ENCODE measurements at regions of chr7 and their contacts with region 1.

Region 1: DNA sequence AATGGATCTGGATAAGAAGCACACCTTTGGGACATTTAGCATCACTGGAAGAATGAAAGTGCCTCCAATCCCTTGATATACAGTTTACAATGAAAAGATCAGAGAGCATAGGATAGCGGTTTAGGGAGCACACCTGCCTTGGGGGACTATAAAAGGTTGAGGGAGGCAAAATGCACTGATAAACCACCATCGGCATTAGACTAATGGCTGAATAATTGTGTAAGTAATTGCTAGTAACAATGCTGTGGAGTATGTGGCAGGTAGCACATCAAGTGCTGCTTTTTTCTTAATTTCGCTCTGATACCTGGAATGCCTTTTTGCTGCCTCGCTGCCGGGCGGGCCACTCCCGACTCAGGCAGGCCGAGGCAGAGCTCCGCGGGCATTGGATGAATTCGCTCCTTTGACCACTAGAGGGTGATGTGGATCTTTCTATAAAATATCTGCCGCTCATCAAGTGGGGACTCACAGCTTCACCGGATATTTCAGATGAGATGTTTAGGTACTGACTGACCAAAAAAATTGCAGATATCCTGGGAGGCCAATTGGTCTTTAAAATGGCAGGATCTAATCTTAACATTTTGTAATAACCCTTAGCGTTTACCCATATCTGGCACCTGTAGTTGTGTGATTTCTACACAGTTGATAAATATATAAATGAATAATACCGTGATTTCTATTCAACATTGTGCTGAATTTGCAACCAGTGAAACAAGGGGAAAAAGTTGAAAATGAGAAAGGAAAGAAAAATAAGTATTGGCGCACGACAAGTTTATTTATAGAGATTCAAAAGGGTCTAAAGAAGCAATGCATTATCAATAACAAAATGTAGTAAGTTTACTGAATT is 116.8 kb upstream of the PRSS1 start:
- DNase-seq: peak; percentile 87
- H3K4me3 ChIP-seq: no peak overlapping the region
- H3K27ac ChIP-seq: peak overlapping the region in 1 of 2 experiments; percentile 11; a peak in 1 of 4 replicates
- H3K4me1 ChIP-seq: no peaks in the 10 kb centered on the region; a peak in 2 of 4 replicates
- H3K27me3 ChIP-seq: peaks cover 14% of the 10 kb centered on the region; the same call in 1 of the 2 replicates
- CTCF ChIP-seq: peak; percentile 93
- EP300 ChIP-seq: no peak
- RAD21 ChIP-seq: peak; percentile 96

Region 2: DNA sequence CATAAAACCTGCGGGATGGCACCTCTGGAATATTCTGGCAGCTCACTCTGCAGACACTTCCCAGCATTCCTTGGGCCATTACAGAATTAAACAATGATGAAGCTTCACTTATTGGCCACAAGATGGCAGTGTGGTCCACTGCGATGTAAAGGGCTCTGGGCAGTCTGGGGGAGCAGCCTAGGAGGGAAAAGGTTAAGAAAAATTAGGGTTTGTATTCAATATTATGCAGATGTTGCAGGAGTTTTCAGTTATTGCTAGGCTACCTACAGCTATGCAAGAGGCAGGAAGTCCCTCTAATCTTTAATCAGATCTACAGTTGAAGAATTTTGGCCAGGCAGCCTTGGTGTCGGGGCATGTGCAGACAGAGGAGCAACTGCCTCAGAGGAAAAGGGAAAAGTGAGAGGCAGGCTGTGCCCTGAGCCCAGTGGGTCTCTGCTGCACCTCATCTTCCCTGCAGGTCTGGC is 116.4 kb before region 1 on chr7:
- CTCF ChIA-PET with region 1: interaction called, 29 read pairs
- POLR2A ChIA-PET with region 1: no interaction called
- DNase-seq: peak; percentile 69
- H3K4me3 ChIP-seq: peak overlapping the region in 1 of 2 experiments; percentile 20; a peak in 1 of 4 replicates
- H3K27ac ChIP-seq: no peak overlapping the region; a peak in 1 of 4 replicates
- H3K4me1 ChIP-seq: peaks cover 0 to 18% of the 10 kb centered on the region in 2 experiments; a peak in 2 of 4 replicates
- H3K27me3 ChIP-seq: peaks cover 33% of the 10 kb centered on the region
- CTCF ChIP-seq: peak; percentile 96
- EP300 ChIP-seq: no peak
- RAD21 ChIP-seq: peak; percentile 85

Region 3: DNA sequence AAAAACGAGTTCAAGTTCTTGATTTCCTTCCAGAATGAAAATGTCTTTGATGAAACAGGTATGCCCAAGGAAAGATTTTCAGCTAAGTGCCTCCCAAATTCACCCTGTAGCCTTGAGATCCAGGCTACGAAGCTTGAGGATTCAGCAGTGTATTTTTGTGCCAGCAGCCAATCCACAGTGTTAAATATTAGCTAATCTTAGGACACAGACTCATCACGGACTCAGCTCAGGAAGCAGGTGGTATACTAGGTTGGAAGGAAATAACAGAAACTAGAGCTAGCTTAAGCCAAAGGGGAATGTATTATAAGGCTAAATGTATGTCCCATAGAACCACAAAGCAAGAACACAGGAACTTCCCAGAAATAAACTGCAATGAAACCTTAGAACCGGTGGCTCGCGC is 34.2 kb before region 1 on chr7:
- CTCF ChIA-PET with region 1: interaction called, 87 read pairs
- POLR2A ChIA-PET with region 1: no interaction called
- DNase-seq: no peak
- H3K4me3 ChIP-seq: no peak overlapping the region
- H3K27ac ChIP-seq: no peak overlapping the region
- H3K4me1 ChIP-seq: peaks cover 0 to 8% of the 10 kb centered on the region in 2 experiments; a peak in 1 of 4 replicates
- H3K27me3 ChIP-seq: peaks cover 12% of the 10 kb centered on the region; the same call in 1 of the 2 replicates
- CTCF ChIP-seq: no peak
- EP300 ChIP-seq: no peak
- RAD21 ChIP-seq: no peak

Region 4: DNA sequence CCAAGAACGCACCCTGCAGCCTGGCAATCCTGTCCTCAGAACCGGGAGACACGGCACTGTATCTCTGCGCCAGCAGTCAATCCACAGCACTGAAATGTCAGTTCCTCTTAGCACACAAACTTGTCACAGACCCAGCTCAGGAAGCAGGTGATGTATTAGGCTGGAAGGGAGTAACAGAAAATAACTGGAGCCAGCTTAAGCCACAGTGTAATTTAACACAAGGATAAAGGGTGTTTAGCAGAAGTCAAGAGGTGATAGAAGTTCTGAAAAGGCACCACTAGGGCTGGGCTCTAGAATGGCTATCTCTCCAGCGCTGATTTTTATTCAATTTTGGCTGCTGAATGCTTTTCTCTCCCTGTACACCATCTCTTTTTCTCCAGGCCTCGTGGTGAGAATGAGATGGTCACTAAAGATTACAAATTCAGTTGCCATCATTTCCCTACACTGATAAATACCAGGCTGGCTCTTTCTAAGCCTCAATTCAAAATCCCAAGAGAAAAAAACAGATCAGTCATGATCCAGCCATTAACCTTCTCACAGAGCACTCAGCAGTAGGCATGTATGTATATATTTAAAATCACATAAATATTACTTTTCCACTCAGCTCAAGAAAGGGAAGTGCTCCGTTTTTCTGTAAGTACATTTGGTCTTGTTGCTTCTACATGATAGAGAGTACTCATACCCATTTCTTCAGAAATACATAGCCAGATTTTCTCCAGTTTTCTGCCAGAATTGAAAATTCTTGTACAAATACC is 14.1 kb after region 1 on chr7:
- CTCF ChIA-PET with region 1: interaction called, 28 read pairs
- POLR2A ChIA-PET with region 1: no interaction called
- DNase-seq: peak; percentile 43
- H3K4me3 ChIP-seq: peak overlapping the region; percentile 2 to 24; a peak in 1 of 4 replicates
- H3K27ac ChIP-seq: peak overlapping the region in 1 of 2 experiments; percentile 98; a peak in 2 of 4 replicates
- H3K4me1 ChIP-seq: peaks cover 0 to 25% of the 10 kb centered on the region in 2 experiments; a peak in 2 of 4 replicates
- H3K27me3 ChIP-seq: peaks cover 15% of the 10 kb centered on the region; the same call in 1 of the 2 replicates
- CTCF ChIP-seq: no peak
- EP300 ChIP-seq: peak in 1 of 2 experiments; percentile 81; a peak in 2 of 4 replicates
- RAD21 ChIP-seq: no peak; the same call in none of the 2 replicates

Region 5: DNA sequence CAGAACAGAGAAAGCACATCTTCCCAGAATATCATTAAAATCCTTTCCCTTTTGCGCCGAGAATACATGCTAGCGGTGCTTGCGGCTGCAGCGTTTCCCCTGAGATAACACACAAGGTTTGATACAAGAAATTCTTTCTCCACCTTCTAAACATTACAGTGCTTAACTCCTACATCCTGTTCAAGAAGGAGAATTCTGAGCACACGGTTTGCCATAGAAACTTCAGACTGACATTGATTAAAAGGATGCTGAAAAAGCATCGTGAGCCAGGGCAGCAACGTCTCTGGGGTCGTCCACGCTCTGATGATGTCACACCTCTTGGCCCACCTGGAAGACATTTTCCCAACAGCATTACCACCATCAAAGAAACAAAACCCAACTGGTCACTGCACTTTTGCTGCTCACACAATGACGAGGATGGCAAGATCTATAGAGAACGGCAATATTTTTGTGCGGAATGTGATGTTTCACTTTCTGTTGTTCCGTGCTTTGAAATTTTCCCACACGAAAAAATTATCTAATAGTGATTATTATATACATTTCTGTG is 89.8 kb after region 1 on chr7:
- CTCF ChIA-PET with region 1: no interaction called
- POLR2A ChIA-PET with region 1: no interaction called
- DNase-seq: no peak
- H3K4me3 ChIP-seq: no peak overlapping the region
- H3K27ac ChIP-seq: no peak overlapping the region
- H3K4me1 ChIP-seq: peaks cover 0 to 5% of the 10 kb centered on the region in 2 experiments; a peak in 1 of 4 replicates
- H3K27me3 ChIP-seq: no peaks in the 10 kb centered on the region; the same call in 1 of the 2 replicates
- CTCF ChIP-seq: no peak
- EP300 ChIP-seq: no peak
- RAD21 ChIP-seq: no peak

Region 6: DNA sequence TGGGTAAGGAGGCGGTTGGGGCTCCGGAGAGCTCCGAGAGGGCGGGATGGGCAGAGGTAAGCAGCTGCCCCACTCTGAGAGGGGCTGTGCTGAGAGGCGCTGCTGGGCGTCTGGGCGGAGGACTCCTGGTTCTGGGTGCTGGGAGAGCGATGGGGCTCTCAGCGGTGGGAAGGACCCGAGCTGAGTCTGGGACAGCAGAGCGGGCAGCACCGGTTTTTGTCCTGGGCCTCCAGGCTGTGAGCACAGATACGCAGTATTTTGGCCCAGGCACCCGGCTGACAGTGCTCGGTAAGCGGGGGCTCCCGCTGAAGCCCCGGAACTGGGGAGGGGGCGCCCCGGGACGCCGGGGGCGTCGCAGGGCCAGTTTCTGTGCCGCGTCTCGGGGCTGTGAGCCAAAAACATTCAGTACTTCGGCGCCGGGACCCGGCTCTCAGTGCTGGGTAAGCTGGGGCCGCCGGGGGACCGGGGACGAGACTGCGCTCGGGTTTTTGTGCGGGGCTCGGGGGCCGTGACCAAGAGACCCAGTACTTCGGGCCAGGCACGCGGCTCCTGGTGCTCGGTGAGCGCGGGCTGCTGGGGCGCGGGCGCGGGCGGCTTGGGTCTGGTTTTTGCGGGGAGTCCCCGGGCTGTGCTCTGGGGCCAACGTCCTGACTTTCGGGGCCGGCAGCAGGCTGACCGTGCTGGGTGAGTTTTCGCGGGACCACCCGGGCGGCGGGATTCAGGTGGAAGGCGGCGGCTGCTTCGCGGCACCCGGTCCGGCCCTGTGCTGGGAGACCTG is 164.3 kb after region 1 on chr7:
- CTCF ChIA-PET with region 1: interaction called, 488 read pairs
- POLR2A ChIA-PET with region 1: no interaction called
- DNase-seq: peak; percentile 75
- H3K4me3 ChIP-seq: peak overlapping the region in 1 of 2 experiments; percentile 28; a peak in 1 of 4 replicates
- H3K27ac ChIP-seq: no peak overlapping the region
- H3K4me1 ChIP-seq: peaks cover 0 to 9% of the 10 kb centered on the region in 2 experiments; a peak in 1 of 4 replicates
- H3K27me3 ChIP-seq: peaks cover 61% of the 10 kb centered on the region
- CTCF ChIP-seq: no peak
- EP300 ChIP-seq: no peak
- RAD21 ChIP-seq: no peak

Region 7: GRCh38 chr7:142866361-142867058 is 234.0 kb after region 1 on chr7:
- CTCF ChIA-PET with region 1: interaction called, 32 read pairs
- POLR2A ChIA-PET with region 1: no interaction called
- DNase-seq: peak; percentile 88
- H3K4me3 ChIP-seq: no peak overlapping the region
- H3K27ac ChIP-seq: no peak overlapping the region
- H3K4me1 ChIP-seq: no peaks in the 10 kb centered on the region
- H3K27me3 ChIP-seq: peaks cover 11% of the 10 kb centered on the region
- CTCF ChIP-seq: peak; percentile 77
- EP300 ChIP-seq: no peak
- RAD21 ChIP-seq: peak; percentile 69

Region 8: DNA sequence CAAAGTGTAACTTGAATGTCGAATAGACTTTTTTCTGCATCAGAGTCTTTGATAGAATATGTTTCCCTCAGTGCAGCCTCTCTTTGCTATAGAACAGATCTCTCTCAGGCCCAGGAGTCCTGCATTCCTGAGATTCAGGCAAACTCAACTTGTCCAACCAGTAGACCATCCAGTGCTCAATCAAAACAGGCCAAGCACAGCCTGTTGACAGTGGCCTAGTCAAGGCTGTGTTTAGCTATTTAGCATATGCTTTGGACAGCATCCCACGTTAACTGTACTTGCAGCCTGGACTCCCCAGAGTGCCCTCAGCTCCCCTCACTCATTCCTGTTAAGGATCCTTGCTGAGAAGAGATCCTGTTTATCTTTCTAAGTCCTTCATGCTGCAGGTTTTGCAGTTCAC is 435.9 kb after region 1 on chr7:
- CTCF ChIA-PET with region 1: no interaction called
- POLR2A ChIA-PET with region 1: no interaction called
- DNase-seq: no peak
- H3K4me3 ChIP-seq: no peak overlapping the region
- H3K27ac ChIP-seq: no peak overlapping the region
- H3K4me1 ChIP-seq: no peaks in the 10 kb centered on the region
- H3K27me3 ChIP-seq: peaks cover 8% of the 10 kb centered on the region; the same call in 1 of the 2 replicates
- CTCF ChIP-seq: no peak
- EP300 ChIP-seq: no peak
- RAD21 ChIP-seq: no peak

Measured in SK-N-SH (cell line).